ENCODE measurements at regions of chr17 and their contacts with region 1.

Region 1: GRCh38 chr17:28726226-28727130 is at the start of gene TLCD1:
- DNase-seq: peak; percentile 90 to 92 (median 92)
- H3K4me3 ChIP-seq: peak within 1 kb of the TSS; percentile 51 to 91 (median 83)
- H3K27ac ChIP-seq: peak within 1 kb of the TSS in 1 of 2 experiments; percentile 94
- H3K4me1 ChIP-seq: peaks cover 5 to 60% (median 45%) of the 10 kb centered on the region in 4 experiments
- H3K27me3 ChIP-seq: no peaks in the 10 kb centered on the region

Region 2: GRCh38 chr17:28667870-28668269 is 58.6 kb before region 1 on chr17:
- CTCF ChIA-PET with region 1: no interaction called
- POLR2A ChIA-PET with region 1: no interaction called
- DNase-seq: no peak
- H3K4me3 ChIP-seq: no peak overlapping the region
- H3K27ac ChIP-seq: no peak overlapping the region
- H3K4me1 ChIP-seq: peaks cover 6 to 9% (median 7%) of the 10 kb centered on the region in 4 experiments
- H3K27me3 ChIP-seq: no peaks in the 10 kb centered on the region

Region 3: DNA sequence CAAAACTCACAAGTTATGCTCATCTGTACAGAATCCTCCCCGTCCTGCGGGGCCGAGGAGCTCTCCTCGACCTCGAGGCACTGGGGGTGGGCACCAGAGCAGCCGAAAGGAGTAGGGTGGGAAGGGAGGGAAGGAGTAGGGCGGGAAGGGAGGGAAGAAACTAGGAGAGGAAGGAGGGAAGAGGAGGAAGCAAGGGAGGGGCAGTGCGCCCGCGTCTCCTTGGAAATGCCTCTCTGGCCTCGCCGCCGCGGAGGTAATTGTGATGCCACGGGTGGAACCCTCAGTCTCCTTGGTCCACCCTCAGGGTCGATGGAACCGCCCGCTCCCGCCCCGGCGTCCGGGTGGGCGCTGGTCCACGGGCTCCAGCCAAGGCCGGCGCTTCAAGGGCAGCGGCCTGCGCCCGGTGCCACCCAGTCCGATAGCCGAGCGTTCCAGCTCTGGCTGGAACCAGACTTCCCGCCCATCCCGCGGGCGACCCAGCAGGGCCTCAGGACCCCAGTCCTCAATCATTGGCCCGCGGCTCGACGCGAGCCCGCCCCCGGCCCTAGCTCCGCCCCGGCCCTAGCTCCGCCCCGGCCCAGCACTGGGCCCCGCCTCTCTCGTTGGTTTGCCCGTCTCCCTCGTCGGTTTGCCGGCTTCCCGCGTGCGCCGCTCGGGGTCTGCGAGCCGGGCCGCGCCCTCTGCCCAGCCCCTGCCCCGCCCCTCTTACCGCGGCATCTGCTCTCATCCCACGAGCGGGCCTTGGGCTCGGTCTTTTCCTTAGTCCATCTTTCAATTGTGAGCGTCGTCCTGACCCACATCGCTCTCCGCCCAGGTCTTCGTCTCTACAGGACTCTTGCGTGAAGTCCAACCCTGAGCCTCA is 15.4 kb before region 1 on chr17:
- CTCF ChIA-PET with region 1: interaction called, 10 read pairs
- POLR2A ChIA-PET with region 1: interaction called, 3 read pairs
- DNase-seq: peak; percentile 77 to 90 (median 87)
- H3K4me3 ChIP-seq: peak overlapping the region; percentile 51 to 83 (median 72)
- H3K27ac ChIP-seq: peak overlapping the region in 1 of 2 experiments; percentile 85
- H3K4me1 ChIP-seq: peaks cover 0 to 29% (median 23%) of the 10 kb centered on the region in 4 experiments
- H3K27me3 ChIP-seq: no peaks in the 10 kb centered on the region

Region 4: GRCh38 chr17:28750178-28751047 is 23.9 kb after region 1 on chr17:
- CTCF ChIA-PET with region 1: interaction called, 507 read pairs
- POLR2A ChIA-PET with region 1: interaction called, 87 read pairs
- DNase-seq: peak; percentile 89 to 93 (median 90)
- H3K4me3 ChIP-seq: no peak overlapping the region
- H3K27ac ChIP-seq: no peak overlapping the region
- H3K4me1 ChIP-seq: peaks cover 0 to 30% (median 24%) of the 10 kb centered on the region in 4 experiments
- H3K27me3 ChIP-seq: no peaks in the 10 kb centered on the region

Region 5: DNA sequence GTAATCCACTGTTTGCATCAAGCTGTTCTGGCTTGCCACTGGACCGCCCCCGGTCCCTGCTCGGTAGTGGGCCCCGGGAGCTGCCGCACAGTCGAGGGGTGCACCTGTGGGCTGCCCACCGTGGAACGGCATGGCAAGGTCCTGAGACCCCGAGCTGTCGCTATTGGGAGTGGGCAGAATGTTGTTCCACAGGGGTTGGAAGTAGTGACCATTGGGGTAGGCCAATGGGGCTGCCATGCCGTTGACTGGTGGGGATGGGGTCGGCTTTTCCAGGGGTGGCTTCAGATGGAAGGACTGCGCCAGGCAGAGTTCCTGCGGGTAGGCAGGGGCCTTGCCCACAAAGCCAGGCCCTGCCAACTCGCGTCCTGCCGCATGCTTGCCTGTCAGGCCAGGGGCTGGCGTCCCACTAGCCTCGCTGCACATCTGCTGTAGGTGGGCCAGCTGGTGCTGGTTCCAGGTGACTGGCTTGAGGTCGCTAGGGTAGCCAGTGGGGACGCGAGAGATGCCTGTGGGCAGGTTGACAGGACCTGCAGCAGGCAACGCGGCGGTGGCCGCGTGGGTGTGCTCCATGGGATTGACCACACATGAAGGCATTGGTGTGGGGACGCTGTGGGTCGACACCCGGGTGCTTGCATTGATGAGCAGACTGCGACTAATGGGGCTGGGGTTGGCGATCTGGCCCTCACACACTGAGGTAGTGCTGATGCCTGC is 32.1 kb after region 1 on chr17:
- CTCF ChIA-PET with region 1: interaction called, 507 read pairs
- POLR2A ChIA-PET with region 1: interaction called, 5 read pairs
- DNase-seq: no peak
- H3K4me3 ChIP-seq: no peak overlapping the region
- H3K27ac ChIP-seq: no peak overlapping the region
- H3K4me1 ChIP-seq: peaks cover 3 to 15% (median 13%) of the 10 kb centered on the region in 4 experiments
- H3K27me3 ChIP-seq: no peaks in the 10 kb centered on the region

Region 6: GRCh38 chr17:28916302-28916934 is 189.9 kb after region 1 on chr17:
- CTCF ChIA-PET with region 1: interaction called, 22 read pairs
- POLR2A ChIA-PET with region 1: no interaction called
- DNase-seq: peak; percentile 45 to 63 (median 59)
- H3K4me3 ChIP-seq: no peak overlapping the region
- H3K27ac ChIP-seq: no peak overlapping the region
- H3K4me1 ChIP-seq: no peaks in the 10 kb centered on the region
- H3K27me3 ChIP-seq: no peaks in the 10 kb centered on the region